ENCODE measurements at regions of chr6 and their contacts with region 1.

Region 1: DNA sequence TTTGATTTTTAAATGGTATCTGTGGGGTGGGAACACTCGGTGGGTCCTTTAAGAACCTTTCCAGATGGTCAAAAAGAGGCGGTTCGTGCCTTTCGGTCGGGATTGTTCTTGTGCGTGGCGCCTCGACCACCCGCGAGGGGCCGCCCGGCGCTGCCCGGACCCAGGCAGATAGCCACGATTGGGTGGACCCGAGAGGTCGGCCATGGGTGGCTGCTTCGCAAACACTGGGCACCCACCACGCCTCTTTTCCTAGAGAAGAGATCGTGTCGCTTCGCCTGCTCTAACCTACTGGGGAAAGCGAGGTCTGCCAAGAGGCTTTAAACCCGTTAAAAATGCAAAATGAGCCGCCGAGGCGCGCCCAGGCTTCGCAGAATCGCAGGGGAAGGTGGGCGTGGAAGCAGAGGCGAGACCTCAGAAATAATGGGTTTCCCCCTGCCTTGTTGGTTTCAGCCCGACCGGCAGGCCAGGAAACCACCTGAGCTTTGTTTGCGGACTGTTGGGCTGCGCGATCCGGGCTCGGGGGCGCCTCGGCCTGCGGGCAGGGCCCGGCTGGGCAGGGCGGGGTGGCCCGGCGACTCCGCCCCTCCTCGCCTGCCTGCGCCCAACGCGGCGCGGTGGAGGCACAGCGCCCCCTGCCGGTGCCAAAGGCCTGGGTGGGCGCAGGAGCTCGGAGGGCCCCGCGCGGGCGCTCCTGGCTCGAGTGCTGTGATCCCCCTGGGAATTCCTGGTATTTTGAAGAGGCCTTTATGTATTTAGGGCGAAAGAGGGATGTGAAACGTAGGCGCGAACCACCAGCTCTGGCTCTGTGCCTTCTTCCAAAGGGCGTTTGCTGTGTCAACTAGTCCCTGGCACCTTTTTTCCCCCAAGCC is 1.6 kb downstream of the MARCKS start:
- DNase-seq: peak; percentile 98
- ATAC-seq: peak; percentile 76
- H3K4me3 Mint-ChIP-seq: no peak overlapping the region
- H3K27ac Mint-ChIP-seq: peak overlapping the region; percentile 85
- H3K4me1 Mint-ChIP-seq: peaks cover 23% of the 10 kb centered on the region
- H3K27me3 Mint-ChIP-seq: no peaks in the 10 kb centered on the region
- CTCF ChIP-seq: peak; percentile 88

Region 2: GRCh38 chr6:112087136-112087911 is 1771.4 kb before region 1 on chr6 and contains the starts of genes FAM229B and TUBE1:
- CTCF ChIA-PET with region 1: no interaction called
- POLR2A ChIA-PET with region 1: no interaction called
- intact Hi-C with region 1: loop called (anchors 5 kb)
- DNase-seq: peak; percentile 74
- ATAC-seq: peak; percentile 96
- H3K4me3 Mint-ChIP-seq: no peak within 1 kb of the TSS
- H3K27ac Mint-ChIP-seq: no peak within 1 kb of the TSS
- H3K4me1 Mint-ChIP-seq: no peaks in the 10 kb centered on the region
- H3K27me3 Mint-ChIP-seq: peaks cover 14% of the 10 kb centered on the region
- CTCF ChIP-seq: no peak
- total RNA-seq, gene FAM229B: 2.0 and 2.6 TPM in 2 replicates
- total RNA-seq, gene TUBE1: 24.1 and 28.0 TPM in 2 replicates

Region 3: GRCh38 chr6:113182370-113183141 is 676.2 kb before region 1 on chr6:
- CTCF ChIA-PET with region 1: no interaction called
- POLR2A ChIA-PET with region 1: interaction called, 3 read pairs
- intact Hi-C with region 1: loop called (anchors 10 kb)
- DNase-seq: no peak
- ATAC-seq: no peak
- H3K4me3 Mint-ChIP-seq: no peak overlapping the region
- H3K27ac Mint-ChIP-seq: no peak overlapping the region
- H3K4me1 Mint-ChIP-seq: no peaks in the 10 kb centered on the region
- H3K27me3 Mint-ChIP-seq: peaks cover 3% of the 10 kb centered on the region
- CTCF ChIP-seq: no peak

Region 4: DNA sequence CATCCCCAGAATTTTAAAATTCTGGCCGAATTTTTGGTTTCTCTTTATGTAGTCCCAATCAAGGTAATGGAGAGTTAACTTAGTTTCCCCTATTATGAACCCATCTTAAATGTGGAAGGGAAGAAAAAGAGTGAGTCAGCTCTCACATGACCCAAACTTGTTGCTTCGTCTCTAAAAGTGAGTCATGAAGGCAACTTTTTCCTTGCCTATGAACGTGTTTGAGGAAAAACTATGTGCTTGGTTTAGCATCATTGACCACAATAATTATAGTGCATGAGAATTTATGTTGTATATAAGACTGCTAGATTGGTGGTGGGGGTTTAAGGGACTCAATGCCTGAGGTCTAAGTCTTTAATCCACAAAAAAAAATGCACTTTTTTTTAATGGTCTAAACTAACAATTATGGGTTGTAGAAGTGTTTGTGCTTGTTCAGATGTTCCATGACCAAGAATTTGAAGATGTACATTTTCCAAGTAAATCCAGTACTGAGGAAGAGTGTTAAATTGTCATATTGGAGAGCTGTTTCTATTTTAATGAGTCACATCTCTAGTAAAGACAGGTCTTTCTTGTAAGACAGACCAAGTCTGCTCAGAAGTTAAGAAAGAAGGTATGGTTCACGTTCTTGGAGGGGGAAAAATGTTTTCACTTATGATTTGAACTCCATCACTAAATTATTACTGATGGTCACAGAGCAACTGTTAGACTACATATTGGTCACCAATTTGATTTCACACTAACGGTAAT is 411.5 kb before region 1 on chr6:
- CTCF ChIA-PET with region 1: interaction called, 4 read pairs
- POLR2A ChIA-PET with region 1: interaction called, 6 read pairs
- intact Hi-C with region 1: loop called (anchors 5 kb)
- DNase-seq: no peak
- ATAC-seq: peak; percentile 31
- H3K4me3 Mint-ChIP-seq: no peak overlapping the region
- H3K27ac Mint-ChIP-seq: no peak overlapping the region
- H3K4me1 Mint-ChIP-seq: peaks cover 24% of the 10 kb centered on the region
- H3K27me3 Mint-ChIP-seq: no peaks in the 10 kb centered on the region
- CTCF ChIP-seq: no peak

Region 5: GRCh38 chr6:113651120-113651519 is 207.6 kb before region 1 on chr6:
- CTCF ChIA-PET with region 1: interaction called, 5 read pairs
- POLR2A ChIA-PET with region 1: interaction called, 11 read pairs
- intact Hi-C with region 1: loop called (anchors 1 kb)
- DNase-seq: no peak
- ATAC-seq: no peak
- H3K4me3 Mint-ChIP-seq: peak overlapping the region; percentile 19
- H3K27ac Mint-ChIP-seq: no peak overlapping the region
- H3K4me1 Mint-ChIP-seq: peaks cover 72% of the 10 kb centered on the region
- H3K27me3 Mint-ChIP-seq: no peaks in the 10 kb centered on the region
- CTCF ChIP-seq: no peak

Region 6: GRCh38 chr6:113846577-113846976 is 12.1 kb before region 1 on chr6:
- CTCF ChIA-PET with region 1: interaction called, 3 read pairs
- POLR2A ChIA-PET with region 1: interaction called, 6 read pairs
- intact Hi-C with region 1: loop called (anchors 1 kb)
- DNase-seq: no peak
- ATAC-seq: no peak
- H3K4me3 Mint-ChIP-seq: no peak overlapping the region
- H3K27ac Mint-ChIP-seq: no peak overlapping the region
- H3K4me1 Mint-ChIP-seq: no peaks in the 10 kb centered on the region
- H3K27me3 Mint-ChIP-seq: no peaks in the 10 kb centered on the region
- CTCF ChIP-seq: no peak

Region 7: GRCh38 chr6:113888493-113888892 is 29.8 kb after region 1 on chr6:
- CTCF ChIA-PET with region 1: no interaction called
- POLR2A ChIA-PET with region 1: no interaction called
- intact Hi-C with region 1: no loop called
- DNase-seq: no peak
- ATAC-seq: no peak
- H3K4me3 Mint-ChIP-seq: no peak overlapping the region
- H3K27ac Mint-ChIP-seq: no peak overlapping the region
- H3K4me1 Mint-ChIP-seq: no peaks in the 10 kb centered on the region
- H3K27me3 Mint-ChIP-seq: no peaks in the 10 kb centered on the region
- CTCF ChIP-seq: no peak

Region 8: DNA sequence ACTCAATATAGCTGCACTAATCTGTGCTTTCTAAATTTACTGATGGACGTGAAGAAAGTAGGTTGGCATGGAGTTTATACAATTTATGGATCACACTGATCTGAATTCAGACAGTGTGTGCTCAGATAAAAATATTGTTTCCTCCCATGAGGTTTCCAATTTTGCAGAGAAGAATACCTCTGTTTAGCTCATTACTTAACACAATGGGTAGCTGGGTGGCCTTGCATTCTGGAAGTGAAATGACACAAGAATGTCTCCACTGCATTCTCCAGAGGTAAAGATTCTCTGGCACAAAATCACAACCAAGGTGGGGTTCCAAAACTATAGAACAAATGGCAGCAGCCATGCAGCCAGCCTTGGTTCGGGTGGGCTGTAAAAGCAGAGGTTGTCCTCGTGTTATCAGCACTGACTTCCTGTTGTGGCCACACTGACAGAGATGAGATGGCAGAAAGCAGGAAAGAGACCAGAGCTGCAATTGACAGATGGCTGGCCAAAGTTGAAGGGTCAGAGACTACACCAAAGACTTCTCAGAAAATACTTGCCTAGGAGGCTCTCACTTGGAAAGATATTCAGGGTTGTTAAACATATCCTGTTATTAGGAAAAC is 62.1 kb after region 1 on chr6:
- CTCF ChIA-PET with region 1: no interaction called
- POLR2A ChIA-PET with region 1: no interaction called
- intact Hi-C with region 1: no loop called
- DNase-seq: no peak
- ATAC-seq: no peak
- H3K4me3 Mint-ChIP-seq: no peak overlapping the region
- H3K27ac Mint-ChIP-seq: no peak overlapping the region
- H3K4me1 Mint-ChIP-seq: peaks cover 3% of the 10 kb centered on the region
- H3K27me3 Mint-ChIP-seq: no peaks in the 10 kb centered on the region
- CTCF ChIP-seq: no peak

Region 9: DNA sequence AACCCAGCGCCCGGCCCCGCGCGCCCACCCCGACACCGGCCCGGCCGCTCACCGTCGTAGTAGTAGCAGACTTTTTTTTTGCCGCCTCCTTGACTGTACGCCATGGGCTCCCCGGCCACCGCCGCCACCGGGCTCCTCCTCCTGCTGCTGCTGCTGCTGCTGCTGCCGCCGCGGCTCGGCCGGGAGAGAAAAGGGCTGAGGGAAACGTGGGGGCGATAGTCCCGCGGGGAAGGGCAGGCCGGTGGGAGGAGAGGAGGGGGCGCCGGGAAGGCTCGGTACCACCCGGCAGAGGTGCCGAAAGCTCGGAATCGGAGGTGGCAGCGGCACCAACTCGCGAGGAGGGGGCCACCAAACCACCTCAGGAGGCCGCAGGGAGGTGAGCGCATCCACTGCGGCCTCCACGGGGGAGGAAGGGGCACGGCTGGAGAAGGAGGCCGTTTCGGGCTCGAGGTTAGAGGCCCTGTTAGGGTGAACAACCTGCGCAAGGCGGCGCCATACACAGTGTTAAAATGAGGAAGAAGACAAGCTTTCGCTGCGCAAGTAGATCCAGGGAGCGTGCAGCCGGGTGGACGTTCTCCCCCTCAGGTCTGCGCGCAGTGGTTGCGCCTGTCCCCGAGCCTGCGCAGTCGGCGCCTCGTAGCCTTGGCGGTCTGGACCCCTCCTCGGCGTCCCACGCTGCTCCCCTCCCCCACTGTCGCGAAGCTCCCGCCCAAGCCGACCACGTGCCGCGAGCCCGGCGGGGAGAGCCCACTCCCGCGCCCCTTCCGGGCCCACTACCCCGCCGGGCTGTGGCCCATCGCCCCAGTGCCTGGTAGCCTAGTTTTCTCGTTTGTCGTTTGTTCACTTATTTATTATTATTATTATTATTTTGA is 112.3 kb after region 1 on chr6 and contains the start of gene HDAC2:
- CTCF ChIA-PET with region 1: interaction called, 3 read pairs
- POLR2A ChIA-PET with region 1: interaction called, 8 read pairs
- intact Hi-C with region 1: loop called (anchors 1 kb)
- DNase-seq: peak; percentile 88
- ATAC-seq: peak; percentile 83
- H3K4me3 Mint-ChIP-seq: peak within 1 kb of the TSS; percentile 99
- H3K27ac Mint-ChIP-seq: peak within 1 kb of the TSS; percentile 98
- H3K4me1 Mint-ChIP-seq: peaks cover 36% of the 10 kb centered on the region
- H3K27me3 Mint-ChIP-seq: no peaks in the 10 kb centered on the region
- CTCF ChIP-seq: no peak
- total RNA-seq, gene HDAC2: 60.0 and 68.4 TPM in 2 replicates

Measured in activated B cell treated with CpG ODN at 0.5 μM for 24 hours (primary cell).